Activated CD4-positive, alpha-beta T cell treated with anti-CD3 and anti-CD28 coated beads, Interleukin-2, amount 10 ng/mL, durations not matched to agents 24 days and 14 days (primary cell): ENCODE measurements at regions of chr4 and their contacts with region 1.

Region 1: DNA sequence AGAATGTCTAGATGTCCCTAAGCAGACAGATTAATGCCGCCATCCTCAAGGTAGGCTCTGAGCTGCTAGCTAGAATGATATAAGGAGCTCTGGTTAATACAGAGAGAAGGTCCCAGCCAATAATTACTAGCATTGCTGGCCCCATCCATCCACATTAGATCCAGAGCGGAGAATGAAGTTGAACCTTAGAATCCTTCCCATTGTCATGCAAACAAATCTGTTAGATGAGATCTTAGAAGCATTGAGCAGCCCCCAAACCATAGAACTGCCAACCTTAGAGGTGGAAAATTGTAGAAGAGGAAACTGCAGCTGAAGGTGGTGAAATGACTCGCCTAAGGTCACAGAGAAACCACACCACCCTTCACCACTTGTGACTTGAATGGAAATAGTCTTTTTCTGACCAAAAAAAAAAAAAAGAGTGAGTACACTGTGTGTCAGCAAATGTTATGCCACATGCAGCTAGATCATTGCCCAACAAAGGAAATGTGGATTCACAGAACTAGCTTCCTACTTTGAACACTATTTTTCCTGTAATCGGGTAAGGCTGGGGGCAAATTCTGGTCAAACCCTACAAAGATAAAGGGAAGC is 162.1 kb downstream of the SMIM20 start:
- DNase-seq: peak; percentile 87
- H3K4me3 Mint-ChIP-seq: peak overlapping the region; percentile 52
- H3K27ac Mint-ChIP-seq: peak overlapping the region; percentile 98
- H3K4me1 Mint-ChIP-seq: peaks cover 70% of the 10 kb centered on the region
- H3K27me3 Mint-ChIP-seq: no peaks in the 10 kb centered on the region

Region 2: GRCh38 chr4:25123236-25123635 is 952.9 kb before region 1 on chr4:
- intact Hi-C with region 1: no loop called
- DNase-seq: peak; percentile 69
- H3K4me3 Mint-ChIP-seq: peak overlapping the region; percentile 23
- H3K27ac Mint-ChIP-seq: peak overlapping the region; percentile 56
- H3K4me1 Mint-ChIP-seq: peaks cover 14% of the 10 kb centered on the region
- H3K27me3 Mint-ChIP-seq: no peaks in the 10 kb centered on the region

Region 3: DNA sequence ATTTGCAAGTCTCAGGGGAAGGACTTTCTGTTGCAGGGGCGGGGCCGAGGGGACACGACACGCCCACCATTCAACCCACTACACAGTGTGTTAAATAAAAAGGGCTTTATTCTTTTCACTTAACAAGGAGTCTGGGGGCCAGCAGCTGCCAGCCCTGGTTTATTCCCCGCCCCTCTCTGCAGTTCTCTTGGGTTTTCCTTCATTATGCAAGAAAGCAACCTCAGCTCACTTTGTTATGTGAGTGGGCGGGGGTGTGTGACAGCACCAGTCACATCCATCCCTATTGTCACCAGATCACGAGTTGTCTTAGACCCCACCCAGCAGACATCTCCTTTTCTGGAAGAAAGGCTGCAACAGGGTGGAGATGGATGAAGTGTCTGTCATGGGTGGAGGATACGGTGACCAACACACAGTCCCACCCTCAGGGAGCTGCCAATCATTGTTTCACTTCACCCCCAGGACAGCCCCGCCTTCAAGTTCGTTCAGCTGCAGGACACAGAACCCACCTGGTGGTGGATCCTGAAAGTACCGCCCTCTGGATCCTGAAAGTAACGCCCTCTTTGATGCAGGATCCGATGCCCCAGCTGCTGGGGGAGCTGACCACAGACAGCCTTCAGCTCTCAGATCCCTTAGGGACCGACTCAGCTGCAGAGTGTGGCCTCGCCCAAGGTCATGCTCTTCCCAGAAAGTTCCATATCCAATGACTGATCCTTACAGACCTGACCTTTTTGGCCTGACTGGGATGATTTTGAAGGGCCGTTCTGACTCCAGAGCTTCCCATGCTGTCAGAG is 82.5 kb before region 1 on chr4:
- intact Hi-C with region 1: loop called (anchors 2 kb)
- DNase-seq: peak; percentile 60
- H3K4me3 Mint-ChIP-seq: no peak overlapping the region
- H3K27ac Mint-ChIP-seq: no peak overlapping the region
- H3K4me1 Mint-ChIP-seq: peaks cover 13% of the 10 kb centered on the region
- H3K27me3 Mint-ChIP-seq: no peaks in the 10 kb centered on the region

Region 4: DNA sequence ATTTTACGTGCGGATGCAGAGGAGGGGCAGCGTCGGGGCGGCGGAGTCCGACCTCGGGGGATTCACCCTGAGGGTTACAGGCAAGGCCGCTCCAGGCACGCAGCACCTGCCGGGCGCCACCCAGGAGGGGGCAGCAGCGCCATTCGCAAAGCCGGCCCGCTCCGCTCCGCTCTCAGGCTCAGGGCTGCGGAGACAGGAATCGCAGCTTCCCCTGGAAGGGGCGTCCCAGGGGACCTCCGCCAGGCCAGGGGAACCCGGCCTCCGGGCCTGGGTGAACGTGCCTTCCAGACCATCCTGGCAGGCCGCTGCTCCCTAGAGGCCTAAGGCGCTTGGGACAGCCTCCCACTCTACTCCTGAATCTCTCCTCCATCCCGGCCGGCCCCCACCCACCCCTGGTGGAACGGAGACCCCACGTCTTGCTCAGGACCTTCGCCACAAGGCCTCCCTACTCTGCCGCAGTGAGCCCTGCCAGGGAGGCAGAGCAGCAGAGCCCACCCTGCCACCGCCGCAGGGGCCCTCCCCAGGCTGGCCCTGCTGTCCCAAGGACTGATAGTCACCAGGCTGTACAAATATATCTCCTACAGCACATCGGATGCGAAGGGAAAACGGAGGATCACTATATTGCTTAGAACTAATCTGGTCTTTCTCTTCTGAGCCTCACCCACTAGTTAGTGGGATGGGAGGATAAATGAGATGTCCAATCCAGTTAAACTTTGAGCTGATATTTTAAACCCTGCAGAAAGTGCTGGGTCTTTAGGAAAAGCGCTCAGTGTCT is 47.1 kb before region 1 on chr4:
- intact Hi-C with region 1: loop called (anchors 2 kb)
- DNase-seq: peak; percentile 93
- H3K4me3 Mint-ChIP-seq: peak overlapping the region; percentile 22
- H3K27ac Mint-ChIP-seq: peak overlapping the region; percentile 47
- H3K4me1 Mint-ChIP-seq: peaks cover 18% of the 10 kb centered on the region
- H3K27me3 Mint-ChIP-seq: no peaks in the 10 kb centered on the region

Region 5: GRCh38 chr4:26116092-26116491 is 40.0 kb after region 1 on chr4:
- intact Hi-C with region 1: no loop called
- DNase-seq: no peak
- H3K4me3 Mint-ChIP-seq: no peak overlapping the region
- H3K27ac Mint-ChIP-seq: no peak overlapping the region
- H3K4me1 Mint-ChIP-seq: no peaks in the 10 kb centered on the region
- H3K27me3 Mint-ChIP-seq: no peaks in the 10 kb centered on the region

Region 6: GRCh38 chr4:26144526-26145155 is 68.5 kb after region 1 on chr4:
- intact Hi-C with region 1: loop called (anchors 1 kb)
- DNase-seq: no peak
- H3K4me3 Mint-ChIP-seq: peak overlapping the region; percentile 56
- H3K27ac Mint-ChIP-seq: peak overlapping the region; percentile 98
- H3K4me1 Mint-ChIP-seq: peaks cover 53% of the 10 kb centered on the region
- H3K27me3 Mint-ChIP-seq: no peaks in the 10 kb centered on the region

Region 7: DNA sequence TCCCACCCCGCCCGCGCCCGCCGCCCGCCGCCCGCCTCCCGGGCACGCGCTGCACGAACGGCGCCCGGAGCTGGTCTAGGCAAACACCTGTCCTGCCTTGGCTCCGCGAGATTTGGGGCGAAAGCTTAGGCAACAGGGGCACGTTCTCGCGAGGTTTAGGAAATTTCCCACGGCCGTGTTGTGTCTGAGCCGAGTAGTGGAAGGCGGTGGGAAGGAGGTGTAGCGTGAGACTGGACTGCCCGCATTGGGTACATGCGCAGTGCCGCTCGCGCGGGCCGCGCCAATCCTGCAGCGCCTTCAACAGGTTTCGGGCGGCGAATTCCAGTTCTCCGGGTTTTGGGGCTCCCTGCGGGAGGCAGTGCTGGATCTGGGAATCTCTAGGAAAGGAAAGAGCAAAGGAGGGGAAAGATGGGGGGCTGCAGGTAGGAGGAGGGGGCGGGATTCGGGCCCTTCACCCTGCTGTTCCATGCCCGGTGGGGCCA is 243.4 kb after region 1 on chr4:
- intact Hi-C with region 1: loop called (anchors 1 kb)
- DNase-seq: peak; percentile 99
- H3K4me3 Mint-ChIP-seq: peak overlapping the region; percentile 97
- H3K27ac Mint-ChIP-seq: peak overlapping the region; percentile 99
- H3K4me1 Mint-ChIP-seq: peaks cover 41% of the 10 kb centered on the region
- H3K27me3 Mint-ChIP-seq: peaks cover 3% of the 10 kb centered on the region